ENCODE measurements at regions of chr15 and their contacts with region 1.

Region 1: DNA sequence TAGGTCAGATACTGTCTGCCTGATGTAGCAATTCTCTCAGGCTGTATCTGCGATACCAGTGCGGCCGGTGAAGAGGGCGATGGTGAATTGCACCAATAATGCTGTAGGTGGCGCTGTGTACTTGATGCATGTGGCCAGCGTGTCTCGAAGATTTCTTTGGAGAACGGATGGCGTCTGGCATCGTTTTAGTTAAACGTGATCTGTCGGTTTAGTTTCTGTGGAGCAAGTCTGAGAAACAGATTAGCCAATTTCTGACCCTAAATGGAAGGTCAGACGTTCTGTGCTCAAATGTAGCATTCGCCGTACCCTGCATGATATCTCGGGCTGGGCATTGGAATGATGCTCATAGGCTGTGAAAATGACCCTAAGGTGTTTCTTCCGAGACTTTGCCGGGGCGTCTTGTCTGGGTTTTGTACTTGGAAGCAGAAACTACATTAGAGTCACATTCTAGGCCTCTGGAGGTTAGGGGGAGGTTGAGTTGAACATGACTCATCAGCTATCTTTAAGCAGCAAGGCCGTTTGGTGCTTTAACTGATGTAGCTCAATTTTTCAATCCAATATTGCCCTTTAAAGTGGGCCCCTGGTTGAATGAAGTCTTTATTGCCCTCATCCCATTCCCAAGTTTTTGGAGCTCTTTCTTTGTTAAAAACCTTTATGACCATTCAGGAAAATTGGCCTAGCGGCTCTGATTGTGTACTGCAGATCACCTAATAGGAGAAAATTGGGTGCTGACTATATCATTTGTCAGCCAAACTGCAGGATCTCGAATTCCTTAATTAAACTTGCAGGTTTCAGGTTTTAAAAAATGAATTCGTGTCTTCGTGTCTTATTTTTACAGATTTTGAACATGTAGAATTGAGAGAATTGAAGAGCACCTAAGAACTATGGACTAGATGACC is 80.0 kb downstream of the SQOR start:
- DNase-seq: peak; percentile 72
- ATAC-seq: peak; percentile 88
- H3K4me3 ChIP-seq: no peak overlapping the region
- H3K27ac ChIP-seq: peak overlapping the region; percentile 22; the same call in 1 of the 2 replicates
- H3K4me1 ChIP-seq: peaks cover 3% of the 10 kb centered on the region; the same call in 1 of the 2 replicates
- H3K27me3 ChIP-seq: no peaks in the 10 kb centered on the region; the same call in 1 of the 2 replicates
- CTCF ChIP-seq: peak; percentile 81
- POLR2A ChIP-seq: no peak
- RAD21 ChIP-seq: peak; percentile 69

Region 2: DNA sequence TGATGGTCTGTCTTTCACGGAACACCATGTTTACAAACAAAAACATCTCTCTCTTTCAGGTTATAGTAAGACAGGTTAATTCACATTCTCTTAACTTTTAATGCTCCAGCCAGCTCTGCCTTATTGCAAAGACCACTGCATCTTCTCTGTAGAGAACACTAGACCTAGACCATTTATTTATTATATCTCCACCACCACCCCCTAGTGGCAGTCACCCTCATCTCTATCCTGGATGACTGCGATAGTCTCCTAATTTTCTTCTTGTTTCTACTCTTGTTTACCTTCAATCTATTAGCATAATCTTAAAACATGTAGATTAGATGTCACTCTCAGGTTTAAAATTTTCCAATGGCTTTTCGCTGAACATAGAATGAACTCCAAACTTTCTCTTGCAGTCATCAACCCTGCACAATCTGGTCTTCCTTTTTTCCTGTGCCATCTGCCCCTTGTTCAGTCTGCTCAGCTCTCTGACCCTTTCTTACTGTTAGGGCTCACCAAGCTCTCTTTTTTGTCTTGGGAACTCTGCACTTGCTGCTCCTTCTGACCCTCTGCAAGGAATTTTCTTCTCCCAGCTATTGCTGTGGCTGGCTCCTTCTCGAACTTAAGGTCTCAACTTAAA is 75.6 kb after region 1 on chr15:
- CTCF ChIA-PET with region 1: interaction called, 4 read pairs
- POLR2A ChIA-PET with region 1: no interaction called
- dilution Hi-C with region 1: no loop called
- in situ Hi-C with region 1: no loop called
- intact Hi-C with region 1: loop called (anchors 1 kb)
- DNase-seq: peak; percentile 7
- ATAC-seq: peak; percentile 65; the same call in 1 of the 2 replicates
- H3K4me3 ChIP-seq: no peak overlapping the region
- H3K27ac ChIP-seq: no peak overlapping the region
- H3K4me1 ChIP-seq: no peaks in the 10 kb centered on the region
- H3K27me3 ChIP-seq: no peaks in the 10 kb centered on the region
- CTCF ChIP-seq: peak; percentile 47
- POLR2A ChIP-seq: no peak
- RAD21 ChIP-seq: no peak

Region 3: GRCh38 chr15:46080016-46080415 is 365.2 kb after region 1 on chr15:
- CTCF ChIA-PET with region 1: no interaction called
- POLR2A ChIA-PET with region 1: no interaction called
- dilution Hi-C with region 1: no loop called
- in situ Hi-C with region 1: no loop called
- intact Hi-C with region 1: loop called (anchors 10 kb)
- DNase-seq: no peak
- ATAC-seq: peak; percentile 32
- H3K4me3 ChIP-seq: no peak overlapping the region
- H3K27ac ChIP-seq: no peak overlapping the region
- H3K4me1 ChIP-seq: no peaks in the 10 kb centered on the region
- H3K27me3 ChIP-seq: no peaks in the 10 kb centered on the region
- CTCF ChIP-seq: no peak
- POLR2A ChIP-seq: no peak
- RAD21 ChIP-seq: no peak

Region 4: GRCh38 chr15:46312133-46312740 is 597.4 kb after region 1 on chr15:
- CTCF ChIA-PET with region 1: no interaction called
- POLR2A ChIA-PET with region 1: no interaction called
- dilution Hi-C with region 1: no loop called
- in situ Hi-C with region 1: no loop called
- intact Hi-C with region 1: loop called (anchors 1 kb)
- DNase-seq: peak; percentile 41
- ATAC-seq: peak; percentile 77
- H3K4me3 ChIP-seq: no peak overlapping the region
- H3K27ac ChIP-seq: no peak overlapping the region
- H3K4me1 ChIP-seq: no peaks in the 10 kb centered on the region
- H3K27me3 ChIP-seq: no peaks in the 10 kb centered on the region
- CTCF ChIP-seq: peak; percentile 72
- POLR2A ChIP-seq: no peak
- RAD21 ChIP-seq: peak; percentile 67